ENCODE measurements at regions of chr2 and their contacts with region 1.

Region 1: DNA sequence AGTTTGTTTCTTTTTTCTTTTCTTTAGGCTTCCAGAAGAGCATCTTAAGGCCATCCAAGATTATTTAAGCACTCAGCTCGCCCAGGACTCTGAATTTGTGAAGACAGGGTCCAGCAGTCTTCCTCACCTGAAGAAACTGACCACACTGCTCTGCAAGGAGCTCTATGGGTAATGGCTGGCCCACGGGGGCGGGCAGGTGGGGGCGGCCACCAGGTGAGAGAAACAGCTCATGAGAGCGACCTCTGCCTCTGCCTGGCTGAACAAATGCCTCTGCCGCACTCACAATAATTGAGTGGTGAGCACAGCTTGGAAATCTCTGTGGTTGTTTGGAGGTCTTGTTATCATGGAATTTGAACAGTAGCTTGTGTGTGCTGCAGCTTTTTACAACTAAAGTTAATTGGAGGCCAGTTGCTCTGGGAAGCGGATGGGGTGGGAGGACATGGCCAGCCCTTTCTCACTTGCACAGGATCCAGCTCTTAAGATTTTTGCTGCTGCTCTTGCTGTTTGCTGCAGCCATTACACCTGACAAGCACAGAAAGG is 70.4 kb downstream of the INPP5D start:
- DNase-seq: no peak
- ATAC-seq: no peak
- H3K4me3 ChIP-seq: no peak overlapping the region
- H3K27ac ChIP-seq: no peak overlapping the region
- H3K4me1 ChIP-seq: no peaks in the 10 kb centered on the region
- H3K27me3 ChIP-seq: peaks cover 0 to 2% (median 2%) of the 10 kb centered on the region in 3 donors
- CTCF ChIP-seq: no peak

Region 2: GRCh38 chr2:233098615-233099014 is 31.9 kb before region 1 on chr2:
- intact Hi-C with region 1: no loop called
- DNase-seq: no peak
- ATAC-seq: peak in 1 of 4 donors; percentile 40
- H3K4me3 ChIP-seq: no peak overlapping the region
- H3K27ac ChIP-seq: no peak overlapping the region
- H3K4me1 ChIP-seq: no peaks in the 10 kb centered on the region
- H3K27me3 ChIP-seq: no peaks in the 10 kb centered on the region
- CTCF ChIP-seq: peak; percentile 14

Region 3: GRCh38 chr2:233489666-233490065 is 359.1 kb after region 1 on chr2:
- intact Hi-C with region 1: loop called in 1 of 2 experiments (anchors 5 kb)
- DNase-seq: no peak
- ATAC-seq: peak in 2 of 4 donors; percentile 32 to 40
- H3K4me3 ChIP-seq: no peak overlapping the region
- H3K27ac ChIP-seq: no peak overlapping the region
- H3K4me1 ChIP-seq: no peaks in the 10 kb centered on the region
- H3K27me3 ChIP-seq: no peaks in the 10 kb centered on the region
- CTCF ChIP-seq: no peak